ENCODE measurements at regions of chr17 and their contacts with region 1.

Region 1: DNA sequence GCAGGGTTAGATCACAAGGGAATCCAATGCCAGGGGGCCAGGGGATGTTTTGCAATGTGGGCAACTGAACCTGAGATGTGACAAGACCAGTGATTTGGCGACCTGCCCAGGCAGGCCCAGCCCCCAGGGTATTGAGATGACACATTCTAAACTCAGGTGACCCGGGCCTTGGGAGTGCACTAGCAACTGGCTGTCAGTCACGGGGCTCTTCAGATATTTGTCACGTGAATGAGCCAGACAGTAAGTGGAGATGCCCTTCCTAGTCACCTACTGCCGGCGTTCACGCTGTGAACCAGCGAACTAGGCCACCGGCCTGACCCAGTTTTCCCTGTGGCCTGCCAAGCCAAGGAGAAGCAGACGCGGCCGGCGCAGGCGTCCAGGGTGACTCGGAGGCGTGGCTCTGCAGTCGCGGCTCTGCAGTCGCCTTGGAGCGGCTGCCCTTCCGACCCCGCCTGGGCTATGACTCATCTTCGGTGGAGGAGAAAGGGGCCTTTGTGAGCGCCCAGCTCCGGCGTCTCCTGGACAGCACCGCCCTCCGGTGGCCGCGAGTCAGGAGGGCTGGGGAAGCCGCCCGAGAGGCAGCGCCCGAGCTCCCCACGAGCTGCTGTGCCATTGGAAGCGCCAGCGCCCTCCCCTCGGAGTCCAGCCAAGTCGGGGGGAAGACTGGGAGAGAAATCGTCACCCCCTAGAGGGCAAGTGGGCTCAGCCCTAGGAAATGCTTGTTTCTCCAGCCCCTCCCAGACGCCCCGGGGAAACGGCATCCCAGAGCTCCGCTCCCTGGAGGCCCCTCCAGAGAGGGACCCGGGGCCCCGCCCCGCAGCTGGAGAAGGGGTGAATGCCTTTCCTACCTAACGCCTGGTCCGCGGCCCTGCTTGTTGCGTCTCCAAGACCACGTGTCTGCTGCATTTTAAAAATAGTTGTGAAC is 38.8 kb downstream of the WSB1 start:
- DNase-seq: peak; percentile 97 to 99
- ATAC-seq: peak; percentile 94 to 98
- H3K4me3 ChIP-seq: peak overlapping the region; percentile 47
- H3K27ac ChIP-seq: peak overlapping the region; percentile 87 to 91
- H3K4me1 ChIP-seq: peaks cover 24% of the 10 kb centered on the region
- CTCF ChIP-seq: peak; percentile 96
- EP300 ChIP-seq: peak; percentile 33 to 51; a peak in 3 of 5 replicates
- POLR2A ChIP-seq: peak; percentile 16; the same call in 1 of the 2 replicates
- RAD21 ChIP-seq: peak; percentile 95 to 100

Region 2: GRCh38 chr17:27199948-27200347 is 132.8 kb before region 1 on chr17:
- CTCF ChIA-PET with region 1: interaction called, 29 read pairs
- POLR2A ChIA-PET with region 1: no interaction called
- DNase-seq: no peak
- ATAC-seq: no peak
- H3K4me3 ChIP-seq: no peak overlapping the region
- H3K27ac ChIP-seq: no peak overlapping the region
- H3K4me1 ChIP-seq: no peaks in the 10 kb centered on the region
- CTCF ChIP-seq: no peak
- EP300 ChIP-seq: no peak
- POLR2A ChIP-seq: no peak
- RAD21 ChIP-seq: no peak

Region 3: DNA sequence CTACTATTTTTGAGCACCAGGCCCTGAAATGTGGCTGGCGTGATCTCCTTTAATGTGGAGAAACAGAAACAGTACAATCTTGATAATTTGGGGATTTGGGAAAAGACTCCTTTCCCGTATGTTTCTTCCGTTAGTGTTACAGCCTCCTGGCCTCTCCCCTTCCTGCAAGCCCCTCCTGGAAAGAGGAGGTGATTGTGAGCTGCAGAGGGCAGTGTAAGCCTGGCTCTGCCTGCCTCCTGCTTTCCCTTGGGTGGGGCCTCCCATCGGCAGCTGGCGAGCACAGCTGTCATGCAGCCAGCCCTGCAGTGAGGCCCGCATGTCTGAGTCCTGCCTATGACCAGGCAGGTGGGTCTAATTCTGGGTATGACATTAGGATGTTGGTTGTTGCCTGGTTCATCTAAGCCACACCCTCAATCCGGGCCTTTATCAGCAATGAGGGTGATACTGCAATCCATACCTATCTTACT is 87.5 kb before region 1 on chr17:
- CTCF ChIA-PET with region 1: interaction called, 306 read pairs
- POLR2A ChIA-PET with region 1: interaction called, 7 read pairs
- DNase-seq: peak; percentile 90 to 95
- ATAC-seq: peak; percentile 87 to 95
- H3K4me3 ChIP-seq: no peak overlapping the region
- H3K27ac ChIP-seq: peak overlapping the region; percentile 72 to 85
- H3K4me1 ChIP-seq: peaks cover 61% of the 10 kb centered on the region
- CTCF ChIP-seq: peak; percentile 87
- EP300 ChIP-seq: no peak
- POLR2A ChIP-seq: no peak
- RAD21 ChIP-seq: peak; percentile 96 to 99

Region 4: GRCh38 chr17:27299384-27300049 is 33.2 kb before region 1 on chr17:
- CTCF ChIA-PET with region 1: interaction called, 18 read pairs
- POLR2A ChIA-PET with region 1: interaction called, 40 read pairs
- DNase-seq: no peak
- ATAC-seq: no peak
- H3K4me3 ChIP-seq: no peak overlapping the region
- H3K27ac ChIP-seq: no peak overlapping the region
- H3K4me1 ChIP-seq: peaks cover 37% of the 10 kb centered on the region
- CTCF ChIP-seq: no peak
- EP300 ChIP-seq: no peak
- POLR2A ChIP-seq: no peak
- RAD21 ChIP-seq: no peak

Region 5: GRCh38 chr17:27345141-27345904 is 12.6 kb after region 1 on chr17:
- CTCF ChIA-PET with region 1: interaction called, 31 read pairs
- POLR2A ChIA-PET with region 1: interaction called, 7 read pairs
- DNase-seq: no peak
- ATAC-seq: no peak
- H3K4me3 ChIP-seq: no peak overlapping the region
- H3K27ac ChIP-seq: no peak overlapping the region
- H3K4me1 ChIP-seq: peaks cover 20% of the 10 kb centered on the region
- CTCF ChIP-seq: no peak
- EP300 ChIP-seq: no peak
- POLR2A ChIP-seq: no peak
- RAD21 ChIP-seq: no peak

Measured in A549 (cell line).